ENCODE measurements at regions of chr16 and their contacts with region 1.

Region 1: DNA sequence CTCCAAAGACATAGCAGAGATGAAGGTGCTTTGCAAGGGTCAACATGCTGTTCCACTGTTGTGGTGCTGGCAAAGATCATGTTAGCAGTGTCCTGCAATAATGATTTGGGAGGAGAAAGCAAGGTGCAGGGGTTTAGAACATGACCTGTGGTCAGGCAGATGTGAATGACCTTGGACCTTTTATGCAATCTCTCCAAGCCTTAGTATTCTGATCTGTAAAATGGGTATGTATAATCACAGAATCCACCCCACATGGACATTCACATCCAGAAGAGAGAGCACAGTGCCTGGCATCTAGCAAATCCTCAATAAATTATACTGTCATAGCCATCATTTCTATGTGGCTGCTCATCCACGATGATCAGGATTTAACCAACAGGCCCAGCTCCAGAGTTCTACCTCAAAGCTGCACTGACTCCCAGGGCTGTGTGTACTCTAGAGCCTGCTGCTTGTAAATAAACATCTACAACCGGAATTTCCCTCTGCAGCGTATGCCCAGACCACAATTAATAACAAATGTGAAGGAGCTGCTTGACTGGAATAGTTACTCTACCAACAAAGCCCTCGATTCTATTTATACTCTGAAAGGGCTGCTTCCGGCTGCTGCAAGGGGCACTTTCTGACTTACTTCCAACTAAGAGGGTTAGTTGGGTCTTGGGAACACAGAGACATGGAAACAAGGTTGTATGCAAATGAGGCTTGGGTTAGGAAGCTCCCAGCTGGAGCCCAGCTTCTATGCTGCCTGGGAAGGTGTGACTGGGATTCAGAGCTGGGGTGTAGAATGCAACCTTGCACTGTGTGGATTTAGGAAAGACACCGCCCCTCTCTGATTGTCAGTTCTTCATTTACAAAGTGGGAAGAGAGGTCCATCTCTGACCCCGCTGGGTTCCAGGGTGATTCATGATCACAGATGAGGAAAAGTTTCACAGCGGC is 265.2 kb downstream of the XYLT1 start:
- DNase-seq: no peak
- ATAC-seq: peak; percentile 23
- H3K4me3 ChIP-seq: no peak overlapping the region
- H3K4me1 ChIP-seq: no peaks in the 10 kb centered on the region
- CTCF ChIP-seq: no peak

Region 2: GRCh38 chr16:17467923-17468540 is 262.5 kb after region 1 on chr16:
- intact Hi-C with region 1: loop called in 1 of 2 experiments (anchors 10 kb)
- DNase-seq: peak; percentile 60 to 88 (median 80)
- ATAC-seq: peak; percentile 74
- H3K4me3 ChIP-seq: no peak overlapping the region
- H3K4me1 ChIP-seq: peaks cover 36% of the 10 kb centered on the region
- CTCF ChIP-seq: peak; percentile 38